Posterior cingulate gyrus (tissue), 11 donors: ENCODE measurements at regions of chr15 and their contacts with region 1.

Region 1: DNA sequence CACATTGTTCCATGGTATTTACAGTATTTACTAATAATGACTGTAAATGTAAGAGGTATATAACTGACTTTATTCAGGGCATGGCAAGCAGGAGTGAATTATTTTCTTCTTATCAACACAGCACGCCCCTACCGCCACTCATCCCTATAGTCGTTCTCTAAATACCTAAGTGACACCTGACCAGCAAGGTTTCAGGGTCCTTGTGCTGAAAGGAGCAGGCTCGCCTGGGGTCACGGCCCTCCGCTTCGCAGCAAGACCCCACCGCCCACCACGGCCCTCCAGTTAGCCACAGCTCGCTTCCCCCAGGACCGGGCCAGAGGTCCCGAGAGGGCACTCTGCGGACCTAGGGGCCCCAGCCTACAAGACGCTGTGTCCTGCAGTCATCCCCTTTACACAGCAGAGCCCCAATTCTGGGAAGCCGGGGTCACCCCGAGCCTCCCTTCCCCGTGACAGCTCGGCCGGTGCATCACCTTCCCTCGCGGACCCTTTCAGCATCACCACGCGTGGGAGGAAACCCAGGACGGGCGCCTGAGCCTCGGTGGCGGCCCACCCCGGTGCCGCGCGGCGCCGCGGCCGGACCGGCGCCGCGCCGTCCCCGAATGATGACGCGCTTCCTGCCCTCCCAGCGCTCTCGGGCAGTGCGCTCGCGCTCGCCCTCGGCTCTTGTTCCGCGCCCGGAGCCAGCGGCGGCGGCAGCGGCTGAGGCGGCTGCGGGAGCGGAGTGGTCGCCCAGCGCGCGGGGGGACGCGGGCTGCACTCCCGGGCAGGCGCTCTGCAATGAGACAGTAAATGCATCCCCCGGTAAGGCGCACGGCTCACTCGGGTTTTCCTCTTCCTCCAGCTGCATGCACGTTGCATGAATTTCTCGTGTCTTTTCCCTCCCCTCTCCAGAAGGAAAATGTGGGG is 225.1 kb upstream of the C2CD4B start:
- DNase-seq: peak; percentile 54 to 95 (median 68)

Region 2: GRCh38 chr15:62324382-62324781 is 65.8 kb before region 1 on chr15:
- intact Hi-C with region 1: no loop called
- DNase-seq: no peak

Region 3: DNA sequence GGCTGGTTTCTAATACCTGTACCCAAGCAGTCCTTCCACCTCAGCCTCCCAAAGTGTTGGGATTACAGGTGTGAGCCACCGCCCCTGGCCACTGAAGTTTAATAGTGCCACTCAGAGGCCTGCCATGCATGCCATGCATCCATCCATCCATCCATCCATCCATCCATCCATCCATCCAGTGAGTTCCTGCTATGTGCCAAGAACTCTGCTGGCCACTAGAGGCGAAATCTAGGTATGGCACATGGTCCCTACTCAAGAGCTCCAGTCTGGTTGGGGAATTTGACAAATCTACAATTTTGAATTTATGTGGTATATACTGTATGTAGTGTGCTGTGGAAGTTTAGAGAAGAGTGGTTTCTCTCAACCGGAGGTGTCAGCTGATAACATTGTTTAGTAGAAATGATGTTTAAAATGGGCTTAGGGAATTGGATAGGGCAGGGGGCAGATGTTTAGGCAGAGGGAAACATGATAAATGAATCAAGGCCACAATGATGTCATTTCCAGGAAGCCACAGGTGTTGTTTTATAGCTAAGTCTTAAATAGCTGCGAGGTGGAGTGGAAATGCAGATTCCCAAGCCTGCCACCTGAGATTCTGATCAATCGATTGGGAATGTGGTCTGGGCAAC is 159.3 kb after region 1 on chr15:
- intact Hi-C with region 1: loop called (anchors 2 kb)
- DNase-seq: peak in 1 of 10 donors; percentile 32

Region 4: DNA sequence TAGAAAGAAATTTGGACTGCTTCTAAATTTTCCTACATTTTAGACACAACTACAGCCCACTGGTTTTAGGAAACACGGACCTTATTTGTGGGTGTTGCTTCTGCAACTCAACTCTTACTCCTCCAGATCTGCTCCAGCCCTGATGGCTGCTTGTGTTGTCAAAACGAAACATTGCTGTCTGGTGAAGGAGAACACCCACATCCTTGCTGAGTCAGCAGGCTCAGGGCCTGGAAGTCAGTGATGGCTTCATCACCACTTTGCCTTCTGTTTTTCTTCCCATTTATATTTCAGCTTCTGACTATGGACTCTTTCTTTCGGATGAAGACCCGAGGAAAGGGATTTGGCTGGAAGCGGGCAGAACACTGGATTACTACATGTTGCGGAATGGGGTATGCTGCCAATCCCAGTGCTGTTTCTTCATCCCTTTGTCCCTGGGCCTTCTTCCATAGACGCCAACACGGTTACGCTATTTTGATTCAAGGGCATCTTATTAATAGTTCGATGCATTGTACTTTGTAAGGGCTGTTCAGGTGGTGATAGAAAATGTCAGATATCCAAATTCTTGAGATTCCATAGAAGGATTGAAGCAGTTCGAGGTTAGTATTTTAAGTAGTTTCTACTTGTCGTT is 259.8 kb after region 1 on chr15:
- intact Hi-C with region 1: loop called (anchors 10 kb)
- DNase-seq: peak in 5 of 10 donors; percentile 10 to 85 (median 39)

Region 5: GRCh38 chr15:62742409-62743171 is 352.5 kb after region 1 on chr15:
- intact Hi-C with region 1: loop called (anchors 5 kb)
- DNase-seq: peak in 8 of 10 donors; percentile 45 to 93 (median 65)